ENCODE measurements at regions of chr15 and their contacts with region 1.

Region 1: DNA sequence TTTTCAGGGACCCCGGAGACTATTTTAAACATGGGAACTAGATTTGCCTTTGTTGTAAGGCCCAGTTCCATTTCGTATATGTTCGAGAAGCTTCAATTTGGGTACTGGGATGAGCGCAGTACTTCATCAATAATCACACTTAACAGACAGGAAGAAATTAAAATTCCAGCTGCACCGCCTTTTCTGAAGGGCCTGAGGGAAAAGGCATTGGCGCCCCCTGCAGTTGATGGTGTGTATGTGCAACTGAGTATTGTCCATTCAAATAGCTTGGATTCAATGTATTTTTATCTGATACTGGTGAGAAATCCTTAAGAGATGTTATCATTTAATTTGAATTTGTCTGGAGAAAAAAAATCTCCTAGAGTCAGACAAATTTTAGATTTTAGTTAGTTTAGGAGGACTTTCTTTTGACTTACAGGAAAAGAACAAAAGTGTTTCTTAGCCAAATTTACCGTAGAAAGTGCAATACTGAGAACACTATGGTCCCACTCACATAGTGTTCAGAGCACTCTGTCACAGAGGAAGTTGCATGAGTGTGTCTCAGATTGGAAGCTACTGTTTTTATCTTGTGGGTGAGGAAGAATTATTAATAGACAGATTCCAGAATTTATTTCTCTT is 5.4 kb upstream of the ALDH1A2 start:
- DNase-seq: peak; percentile 77
- H3K4me3 Mint-ChIP-seq: no peak overlapping the region
- H3K27ac Mint-ChIP-seq: no peak overlapping the region
- H3K4me1 Mint-ChIP-seq: no peaks in the 10 kb centered on the region
- H3K27me3 Mint-ChIP-seq: peaks cover 27% of the 10 kb centered on the region

Region 2: DNA sequence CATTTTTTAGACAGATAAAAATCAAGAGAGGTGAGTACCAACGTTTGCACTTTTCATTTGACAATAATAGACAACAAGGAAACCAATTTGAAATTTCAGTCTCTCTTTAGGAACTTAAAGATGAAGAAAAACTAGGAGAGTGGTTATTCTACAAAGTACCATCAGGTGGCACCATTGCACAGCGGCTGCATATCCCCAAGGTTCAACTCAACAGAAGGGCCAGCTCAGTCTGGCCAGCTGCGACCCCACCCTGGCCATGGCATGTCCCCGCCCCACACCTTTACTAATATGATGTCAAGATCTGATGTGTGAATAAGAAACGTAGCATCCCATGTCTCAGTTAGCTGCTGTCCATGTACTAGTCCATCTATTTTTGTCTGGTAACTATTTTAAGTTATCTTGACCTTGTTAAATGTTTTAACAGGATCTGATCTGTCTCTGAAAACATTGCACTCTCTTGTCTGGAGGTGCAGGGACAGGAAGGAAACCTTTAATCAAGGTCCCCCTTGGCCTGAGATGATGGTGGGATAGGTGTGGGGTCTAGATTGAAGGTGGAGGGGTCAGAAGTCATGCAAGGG is 730.1 kb before region 1 on chr15:
- CTCF ChIA-PET with region 1: no interaction called
- intact Hi-C with region 1: loop called (anchors 5 kb)
- DNase-seq: peak; percentile 52
- H3K4me3 Mint-ChIP-seq: no peak overlapping the region
- H3K27ac Mint-ChIP-seq: no peak overlapping the region
- H3K4me1 Mint-ChIP-seq: no peaks in the 10 kb centered on the region
- H3K27me3 Mint-ChIP-seq: peaks cover 2% of the 10 kb centered on the region

Region 3: DNA sequence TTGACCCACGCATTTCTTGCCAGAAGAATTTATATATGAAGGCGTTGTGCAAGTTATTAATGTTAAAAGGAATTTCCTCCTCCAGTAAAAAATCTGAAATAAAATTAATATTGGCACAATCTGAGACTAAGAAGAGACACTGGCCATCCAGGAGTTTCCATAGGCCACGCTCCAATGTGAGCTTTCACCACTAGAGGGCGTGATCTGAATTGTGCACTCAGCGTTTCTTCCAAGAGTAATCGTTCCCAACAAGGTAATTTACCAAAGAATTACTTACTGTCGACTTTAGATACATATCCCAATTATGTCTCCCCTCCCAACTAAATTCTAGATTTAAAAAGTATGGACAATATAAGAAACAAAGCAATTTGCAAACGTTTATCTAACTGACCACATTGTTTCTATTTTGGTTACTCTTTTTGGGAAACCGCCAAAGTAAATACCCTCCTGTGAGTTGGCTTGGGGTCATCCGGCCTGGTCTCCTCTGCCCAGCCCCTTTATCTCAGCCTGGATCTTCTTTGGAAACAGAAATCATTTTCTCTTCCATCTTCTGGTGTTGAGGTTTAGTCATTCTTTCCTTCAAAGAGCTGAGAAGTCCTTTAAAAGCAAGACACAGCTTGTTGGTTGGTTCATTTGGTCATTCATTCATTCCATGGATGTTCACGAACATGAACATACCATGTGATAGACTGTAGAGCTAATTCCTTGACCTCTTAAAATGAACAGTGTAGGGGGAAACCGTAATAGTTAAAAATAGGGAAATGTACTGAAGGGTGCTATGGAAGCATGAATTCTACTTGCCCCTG is 338.2 kb before region 1 on chr15:
- CTCF ChIA-PET with region 1: no interaction called
- intact Hi-C with region 1: loop called (anchors 1 kb)
- DNase-seq: peak; percentile 69
- H3K4me3 Mint-ChIP-seq: no peak overlapping the region
- H3K27ac Mint-ChIP-seq: no peak overlapping the region
- H3K4me1 Mint-ChIP-seq: peaks cover 8% of the 10 kb centered on the region
- H3K27me3 Mint-ChIP-seq: no peaks in the 10 kb centered on the region

Region 4: DNA sequence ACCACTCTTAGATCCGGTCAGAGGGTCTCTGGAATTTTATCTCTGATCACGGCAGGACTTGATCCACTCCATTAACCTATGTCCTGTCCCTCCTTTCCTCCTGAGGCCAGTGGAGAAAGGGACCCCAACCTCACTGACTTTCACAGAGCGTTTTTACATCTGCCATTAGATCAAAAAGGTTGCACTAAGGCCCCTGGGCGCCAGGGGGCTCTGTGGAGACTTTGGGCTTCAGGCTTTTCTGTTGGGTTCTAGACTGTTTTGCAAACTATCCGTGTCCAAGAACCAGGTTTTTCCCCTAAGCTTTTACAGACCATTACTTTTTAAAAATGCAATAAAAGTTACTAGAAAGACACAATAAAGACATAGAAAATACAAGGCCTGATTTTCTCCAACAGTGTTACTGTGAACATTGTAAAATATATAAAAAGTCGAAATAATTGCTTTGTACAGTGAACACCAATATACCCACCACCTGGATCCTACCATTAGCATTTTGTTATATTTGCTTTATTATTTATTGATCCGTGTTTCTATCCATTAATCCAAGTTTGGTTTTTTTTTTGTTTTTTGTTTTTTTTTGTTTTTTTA is 204.7 kb before region 1 on chr15:
- CTCF ChIA-PET with region 1: interaction called, 29 read pairs
- intact Hi-C with region 1: loop called (anchors 1 kb)
- DNase-seq: peak; percentile 74
- H3K4me3 Mint-ChIP-seq: no peak overlapping the region
- H3K27ac Mint-ChIP-seq: no peak overlapping the region
- H3K4me1 Mint-ChIP-seq: no peaks in the 10 kb centered on the region
- H3K27me3 Mint-ChIP-seq: peaks cover 31% of the 10 kb centered on the region

Region 5: DNA sequence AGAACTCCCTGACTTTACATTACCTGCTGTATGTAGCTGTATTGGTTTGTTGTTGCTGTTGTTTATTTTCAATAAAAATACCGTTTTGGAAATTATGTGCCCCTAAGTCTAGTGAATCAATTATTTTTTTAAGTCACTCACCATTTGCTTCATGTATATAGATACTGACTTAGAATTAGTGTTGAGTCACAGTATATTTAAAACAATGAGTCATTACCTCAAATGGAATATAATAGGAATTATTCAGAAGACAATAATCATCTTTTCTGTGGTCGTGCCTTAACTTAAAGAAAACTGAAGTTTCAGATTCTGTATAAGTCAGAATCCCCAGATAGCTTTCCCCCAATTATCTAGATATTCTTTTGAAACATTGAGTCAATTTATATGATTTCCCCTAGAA is 15.6 kb after region 1 on chr15:
- CTCF ChIA-PET with region 1: interaction called, 18 read pairs
- intact Hi-C with region 1: no loop called
- DNase-seq: no peak
- H3K4me3 Mint-ChIP-seq: no peak overlapping the region
- H3K27ac Mint-ChIP-seq: no peak overlapping the region
- H3K4me1 Mint-ChIP-seq: peaks cover 2% of the 10 kb centered on the region
- H3K27me3 Mint-ChIP-seq: peaks cover 16% of the 10 kb centered on the region

Measured in activated naive CD4-positive, alpha-beta T cell treated with anti-CD3 and anti-CD28 coated beads for 36 hours (primary cell).